Astrocyte of the cerebellum (primary cell): ENCODE measurements at regions of chr14 and their contacts with region 1.

Region 1: GRCh38 chr14:104610749-104611310 is 6.3 kb upstream of the TMEM179 start:
- DNase-seq: no peak
- H3K4me3 ChIP-seq: no peak overlapping the region
- CTCF ChIP-seq: no peak

Region 2: DNA sequence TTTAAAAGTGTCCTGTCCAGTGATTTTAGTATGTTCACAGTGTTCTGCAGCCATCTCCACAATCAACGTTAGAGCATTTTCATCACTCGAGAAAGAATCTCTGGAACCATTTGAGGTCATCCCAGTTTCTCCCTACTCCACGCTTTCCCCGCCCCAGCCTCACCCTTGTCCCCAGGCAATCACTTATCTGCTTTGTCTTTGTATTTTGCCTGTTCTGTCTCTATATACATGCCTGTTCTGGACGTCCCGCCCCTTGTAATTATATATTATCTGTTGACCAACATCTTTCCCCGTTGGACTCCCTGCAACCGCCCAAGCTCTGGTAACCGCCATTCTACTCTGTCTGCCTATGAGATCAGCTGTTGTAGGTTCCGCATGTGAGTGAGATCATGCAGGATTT is 546.8 kb before region 1 on chr14:
- in situ Hi-C with region 1: loop called (anchors 10 kb)
- DNase-seq: no peak
- H3K4me3 ChIP-seq: no peak overlapping the region
- CTCF ChIP-seq: no peak

Region 3: DNA sequence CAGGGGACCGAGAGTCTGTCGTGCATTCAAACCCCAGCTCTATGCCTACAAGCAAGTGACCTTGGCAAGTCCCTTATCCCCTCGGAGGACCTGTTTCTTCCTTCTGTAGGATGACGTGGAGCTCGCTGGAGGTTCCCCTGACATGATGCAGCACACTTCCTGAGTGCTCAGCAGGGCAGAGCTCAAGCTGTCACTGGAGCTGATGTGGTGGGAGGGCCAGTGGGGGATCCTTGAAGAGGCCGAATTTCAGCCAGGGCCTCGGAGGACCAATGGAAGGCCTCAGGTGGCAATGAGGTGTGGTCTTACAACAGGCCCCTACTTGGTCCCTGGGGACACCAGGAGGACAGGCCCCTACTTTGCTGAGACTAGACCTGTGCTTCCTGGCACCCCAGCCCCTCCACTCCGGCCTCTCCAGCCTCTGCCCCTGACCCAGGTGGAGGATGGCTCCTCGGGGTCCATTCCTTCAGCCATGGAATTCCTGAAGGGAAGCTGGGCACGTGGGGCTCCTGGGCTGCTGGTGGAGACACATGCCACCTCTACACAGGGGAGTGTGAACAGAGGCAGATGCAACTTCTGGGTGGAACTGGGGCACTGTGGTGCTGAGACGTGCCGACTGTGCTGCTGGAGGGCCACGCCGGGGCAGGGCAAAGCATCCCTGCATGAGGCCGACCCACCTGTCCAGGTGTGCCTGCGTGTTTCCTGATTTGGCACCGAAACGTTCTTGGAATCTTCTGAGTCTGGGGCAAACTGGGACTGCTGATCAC is 491.2 kb before region 1 on chr14:
- in situ Hi-C with region 1: loop called (anchors 10 kb)
- DNase-seq: no peak
- H3K4me3 ChIP-seq: no peak overlapping the region
- CTCF ChIP-seq: no peak

Region 4: DNA sequence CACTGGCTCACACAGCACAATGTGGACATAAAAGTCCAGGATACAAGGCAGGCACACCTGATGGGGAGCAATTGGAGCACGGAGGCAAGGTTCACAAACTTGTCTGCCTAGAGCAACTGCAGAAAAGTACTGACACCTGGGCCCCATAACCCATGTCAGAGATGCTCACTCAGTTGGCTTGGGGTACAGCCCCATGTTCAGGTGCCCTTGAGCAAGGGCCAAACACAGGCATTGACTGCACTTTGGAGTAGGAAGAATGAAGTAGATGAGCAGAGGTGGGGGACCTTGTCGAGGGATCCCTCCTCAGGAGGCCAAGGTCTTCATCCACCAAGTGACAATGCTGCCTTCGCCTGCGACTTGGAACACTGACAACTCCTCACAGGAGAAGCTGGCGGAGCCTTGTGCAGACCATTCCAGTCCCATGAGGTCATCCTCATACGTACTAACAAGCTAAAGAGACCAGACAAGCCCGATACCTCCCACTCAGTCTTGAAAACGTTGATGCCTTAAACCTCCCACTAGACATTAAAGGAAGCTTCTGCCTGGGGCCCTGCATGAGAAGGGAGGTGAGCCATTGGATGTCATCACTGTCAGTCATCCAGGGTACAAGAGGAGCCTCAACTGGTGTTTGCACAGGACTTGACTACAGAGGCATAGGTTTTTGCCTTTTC is 73.8 kb before region 1 on chr14:
- in situ Hi-C with region 1: loop called (anchors 5 kb)
- DNase-seq: no peak
- H3K4me3 ChIP-seq: no peak overlapping the region
- CTCF ChIP-seq: no peak